Gastrocnemius medialis (tissue), 4 donors: ENCODE measurements at regions of chr1 and their contacts with region 1.

Region 1: GRCh38 chr1:221672239-221672645 is 69.6 kb downstream of the DUSP10 start:
- DNase-seq: no peak
- ATAC-seq: no peak
- H3K4me3 ChIP-seq: no peak overlapping the region
- H3K27ac ChIP-seq: no peak overlapping the region
- H3K4me1 ChIP-seq: no peaks in the 10 kb centered on the region
- H3K27me3 ChIP-seq: no peaks in the 10 kb centered on the region
- CTCF ChIP-seq: no peak
- POLR2A ChIP-seq: no peak

Region 2: DNA sequence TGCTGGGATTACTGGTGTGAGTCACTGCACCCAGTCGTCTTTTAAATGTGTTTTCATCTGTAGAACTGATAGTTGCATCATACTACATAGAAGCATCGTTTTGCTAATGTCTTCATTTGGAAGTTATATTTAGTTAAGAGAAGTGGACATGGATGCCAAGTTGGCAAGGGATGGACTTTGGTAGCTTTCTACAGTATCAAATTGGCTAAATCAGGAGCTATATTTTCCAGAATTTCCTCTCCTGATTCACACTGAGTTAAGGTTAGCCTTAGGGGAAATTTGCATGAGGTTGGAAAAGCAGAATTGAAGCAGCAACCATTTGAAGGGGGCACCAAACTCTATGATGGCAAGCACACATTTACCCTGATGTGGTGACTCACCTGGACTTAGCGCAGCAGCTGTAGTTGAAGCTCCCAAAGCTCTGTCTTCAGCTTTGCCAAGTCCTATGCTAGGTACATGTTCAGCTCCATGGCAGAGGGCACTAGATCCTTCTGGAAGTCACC is 25.7 kb after region 1 on chr1:
- in situ Hi-C with region 1: no loop called
- intact Hi-C with region 1: loop called (anchors 2 kb)
- DNase-seq: peak in 1 of 2 donors; percentile 27
- ATAC-seq: peak; percentile 86
- H3K4me3 ChIP-seq: no peak overlapping the region
- H3K27ac ChIP-seq: peak overlapping the region; percentile 3 to 53 (median 36)
- H3K4me1 ChIP-seq: peaks cover 0 to 12% of the 10 kb centered on the region in 2 donors
- H3K27me3 ChIP-seq: no peaks in the 10 kb centered on the region
- CTCF ChIP-seq: no peak
- POLR2A ChIP-seq: no peak